ENCODE measurements at regions of chr15 and their contacts with region 1.

Region 1: DNA sequence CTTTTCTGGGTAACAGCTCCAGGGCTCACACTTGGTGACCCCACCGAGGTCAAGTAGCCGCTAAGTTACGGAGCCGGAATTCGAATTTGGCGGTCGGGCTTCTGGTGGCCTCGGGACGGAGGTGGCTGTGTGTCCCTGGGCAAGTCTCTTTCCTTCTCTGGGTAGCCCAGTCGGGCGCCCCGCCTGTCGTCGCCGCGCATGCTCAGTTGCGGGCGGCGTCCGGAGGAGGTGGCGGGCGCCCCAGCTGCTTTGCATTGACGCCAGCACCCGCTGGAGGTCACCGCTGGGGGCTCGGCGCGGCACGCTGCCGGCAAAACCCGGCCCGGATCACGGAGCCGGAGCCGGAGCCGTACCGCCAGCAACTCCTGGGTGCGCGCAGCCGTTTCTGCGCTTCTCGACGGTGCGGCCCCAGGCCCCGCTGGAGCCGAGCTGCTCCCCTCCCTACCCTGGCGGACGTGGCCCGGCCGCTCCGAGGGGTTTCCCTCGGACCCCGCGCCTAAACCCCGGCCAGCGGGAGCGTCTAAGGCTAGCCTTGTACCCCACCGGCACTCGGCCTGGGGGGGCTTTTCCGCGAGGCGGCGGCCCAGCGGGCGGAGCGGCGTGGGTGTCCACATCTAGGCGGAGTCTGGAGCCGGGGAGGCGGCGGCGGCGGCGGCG is 474 bp upstream of the PDE8A start:
- DNase-seq: peak; percentile 80 to 96
- H3K4me3 ChIP-seq: peak overlapping the region; percentile 94 to 98
- H3K27ac ChIP-seq: peak overlapping the region; percentile 92 to 94
- H3K4me1 ChIP-seq: peaks cover 0 to 6% of the 10 kb centered on the region in 2 donors
- H3K27me3 ChIP-seq: no peaks in the 10 kb centered on the region
- CTCF ChIP-seq: peak; percentile 35 to 69 (median 38)

Region 2: GRCh38 chr15:84600851-84601838 is 380.0 kb before region 1 on chr15 and contains the start of gene ZSCAN2:
- intact Hi-C with region 1: loop called (anchors 2 kb)
- DNase-seq: peak; percentile 90 to 98
- H3K4me3 ChIP-seq: peak within 1 kb of the TSS; percentile 85 to 91
- H3K27ac ChIP-seq: peak within 1 kb of the TSS; percentile 43 to 72
- H3K4me1 ChIP-seq: peaks cover 0 to 13% of the 10 kb centered on the region in 2 donors
- H3K27me3 ChIP-seq: no peaks in the 10 kb centered on the region
- CTCF ChIP-seq: no peak
- total RNA-seq, gene ZSCAN2: 4.6 TPM

Region 3: GRCh38 chr15:84944311-84944710 is 36.9 kb before region 1 on chr15:
- intact Hi-C with region 1: no loop called
- DNase-seq: no peak
- H3K4me3 ChIP-seq: no peak overlapping the region
- H3K27ac ChIP-seq: no peak overlapping the region
- H3K4me1 ChIP-seq: peaks cover 0 to 11% of the 10 kb centered on the region in 2 donors
- H3K27me3 ChIP-seq: no peaks in the 10 kb centered on the region
- CTCF ChIP-seq: no peak

Region 4: DNA sequence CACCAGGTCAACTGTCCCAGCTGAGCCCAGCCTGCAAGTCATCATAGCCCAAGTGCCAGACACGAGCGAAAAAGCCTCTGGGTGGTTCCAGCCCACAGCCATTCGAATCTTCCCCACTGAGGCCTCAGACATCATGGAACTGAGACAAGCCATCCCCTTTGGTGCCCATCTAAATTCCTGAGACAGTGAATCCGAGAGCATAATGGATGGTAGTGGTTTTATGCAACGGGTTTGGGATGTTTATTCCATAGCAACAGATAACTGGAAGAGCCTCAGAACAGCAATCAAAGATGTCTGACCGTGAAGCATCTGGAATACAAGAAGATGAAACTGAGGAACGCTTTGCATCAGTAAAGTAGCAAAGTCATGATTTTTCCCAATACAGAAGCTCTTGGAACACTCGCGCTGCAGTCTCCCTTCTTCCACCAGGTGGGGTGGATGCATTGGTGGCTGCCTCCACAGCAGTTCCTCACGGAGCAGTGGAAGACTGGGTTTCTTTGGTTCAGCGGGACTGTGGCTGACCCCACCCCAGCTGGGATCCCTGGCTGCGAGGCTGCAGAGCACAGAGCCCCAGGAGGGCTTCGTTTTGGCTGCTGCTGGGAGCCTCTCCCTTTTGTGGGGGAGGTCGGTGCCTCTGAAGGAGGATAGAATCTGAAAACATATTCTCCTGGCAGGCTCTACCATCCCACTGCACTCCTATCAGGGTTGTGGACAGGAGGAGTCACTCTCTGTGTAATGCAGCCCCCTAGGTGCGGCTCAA is 25.9 kb before region 1 on chr15:
- intact Hi-C with region 1: loop called (anchors 2 kb)
- DNase-seq: peak; percentile 51 to 88
- H3K4me3 ChIP-seq: peak overlapping the region in 1 of 2 donors; percentile 36
- H3K27ac ChIP-seq: no peak overlapping the region
- H3K4me1 ChIP-seq: peaks cover 2 to 9% of the 10 kb centered on the region in 2 donors
- H3K27me3 ChIP-seq: no peaks in the 10 kb centered on the region
- CTCF ChIP-seq: peak; percentile 81 to 85 (median 84)

Region 5: DNA sequence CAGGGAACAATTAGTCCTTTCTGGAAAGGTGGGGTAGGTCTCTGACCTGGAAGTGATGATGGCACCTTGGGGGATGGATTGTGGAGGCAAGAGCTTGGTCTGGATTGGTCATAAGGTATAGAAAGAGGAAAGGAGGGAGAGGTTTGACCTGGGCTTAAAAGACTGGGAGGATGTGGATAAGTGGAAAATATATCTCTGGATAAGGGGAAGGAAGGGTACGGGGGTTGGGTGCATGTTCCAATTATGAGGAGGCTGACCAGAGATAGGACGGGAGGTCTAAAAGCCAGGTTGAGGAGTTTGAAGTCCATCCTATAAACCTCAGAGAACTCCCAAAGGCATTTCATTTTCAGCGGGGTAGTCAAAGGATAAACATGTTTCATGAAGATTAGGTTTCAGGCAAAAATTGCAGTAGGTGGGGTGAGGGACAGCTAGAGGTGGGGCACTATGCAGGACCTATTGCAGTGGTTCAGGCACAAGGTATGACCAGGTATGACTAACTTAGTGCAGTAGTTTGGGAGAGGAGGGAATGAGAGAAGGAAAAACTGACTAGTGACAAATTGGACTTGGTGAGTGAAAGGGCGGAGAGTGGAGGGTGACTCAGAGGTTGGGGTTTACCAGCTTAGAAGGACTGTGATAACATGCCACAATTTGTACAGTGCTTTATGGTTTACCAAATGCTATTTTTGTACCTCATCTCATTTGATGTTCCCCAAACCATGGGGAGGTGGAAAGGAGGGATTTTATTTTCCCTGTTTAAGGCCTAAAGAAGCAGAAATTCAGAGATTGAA is 11.2 kb after region 1 on chr15:
- intact Hi-C with region 1: loop called (anchors 1 kb)
- DNase-seq: peak in 1 of 2 donors; percentile 76
- H3K4me3 ChIP-seq: no peak overlapping the region
- H3K27ac ChIP-seq: peak overlapping the region; percentile 54 to 66
- H3K4me1 ChIP-seq: peaks cover 3 to 18% of the 10 kb centered on the region in 2 donors
- H3K27me3 ChIP-seq: no peaks in the 10 kb centered on the region
- CTCF ChIP-seq: no peak

Region 6: GRCh38 chr15:85010386-85011159 is 29.4 kb after region 1 on chr15:
- intact Hi-C with region 1: loop called (anchors 2 kb)
- DNase-seq: no peak
- H3K4me3 ChIP-seq: no peak overlapping the region
- H3K27ac ChIP-seq: peak overlapping the region; percentile 79 to 89
- H3K4me1 ChIP-seq: peaks cover 5 to 34% of the 10 kb centered on the region in 2 donors
- H3K27me3 ChIP-seq: no peaks in the 10 kb centered on the region
- CTCF ChIP-seq: no peak

Region 7: GRCh38 chr15:85044251-85044853 is 63.2 kb after region 1 on chr15:
- intact Hi-C with region 1: loop called (anchors 2 kb)
- DNase-seq: peak in 1 of 2 donors; percentile 68
- H3K4me3 ChIP-seq: no peak overlapping the region
- H3K27ac ChIP-seq: no peak overlapping the region
- H3K4me1 ChIP-seq: peaks cover 0 to 2% of the 10 kb centered on the region in 2 donors
- H3K27me3 ChIP-seq: no peaks in the 10 kb centered on the region
- CTCF ChIP-seq: peak; percentile 43 to 70 (median 65)

Measured in ascending aorta (tissue), 2 donors.